ENCODE measurements at regions of chr10 and their contacts with region 1.

Region 1: GRCh38 chr10:29611781-29612381 is 22.9 kb downstream of the SVIL start:
- DNase-seq: no peak
- H3K4me3 ChIP-seq: no peak overlapping the region
- H3K27ac ChIP-seq: no peak overlapping the region
- H3K27me3 ChIP-seq: no peaks in the 10 kb centered on the region
- CTCF ChIP-seq: no peak

Region 2: GRCh38 chr10:29590915-29591650 is 20.8 kb before region 1 on chr10:
- CTCF ChIA-PET with region 1: interaction called, 13 read pairs
- POLR2A ChIA-PET with region 1: no interaction called
- DNase-seq: no peak
- H3K4me3 ChIP-seq: no peak overlapping the region
- H3K27ac ChIP-seq: no peak overlapping the region
- H3K27me3 ChIP-seq: no peaks in the 10 kb centered on the region
- CTCF ChIP-seq: no peak